Naive thymus-derived CD4-positive, alpha-beta T cell (primary cell): ENCODE measurements at regions of chr16 and their contacts with region 1.

Region 1: DNA sequence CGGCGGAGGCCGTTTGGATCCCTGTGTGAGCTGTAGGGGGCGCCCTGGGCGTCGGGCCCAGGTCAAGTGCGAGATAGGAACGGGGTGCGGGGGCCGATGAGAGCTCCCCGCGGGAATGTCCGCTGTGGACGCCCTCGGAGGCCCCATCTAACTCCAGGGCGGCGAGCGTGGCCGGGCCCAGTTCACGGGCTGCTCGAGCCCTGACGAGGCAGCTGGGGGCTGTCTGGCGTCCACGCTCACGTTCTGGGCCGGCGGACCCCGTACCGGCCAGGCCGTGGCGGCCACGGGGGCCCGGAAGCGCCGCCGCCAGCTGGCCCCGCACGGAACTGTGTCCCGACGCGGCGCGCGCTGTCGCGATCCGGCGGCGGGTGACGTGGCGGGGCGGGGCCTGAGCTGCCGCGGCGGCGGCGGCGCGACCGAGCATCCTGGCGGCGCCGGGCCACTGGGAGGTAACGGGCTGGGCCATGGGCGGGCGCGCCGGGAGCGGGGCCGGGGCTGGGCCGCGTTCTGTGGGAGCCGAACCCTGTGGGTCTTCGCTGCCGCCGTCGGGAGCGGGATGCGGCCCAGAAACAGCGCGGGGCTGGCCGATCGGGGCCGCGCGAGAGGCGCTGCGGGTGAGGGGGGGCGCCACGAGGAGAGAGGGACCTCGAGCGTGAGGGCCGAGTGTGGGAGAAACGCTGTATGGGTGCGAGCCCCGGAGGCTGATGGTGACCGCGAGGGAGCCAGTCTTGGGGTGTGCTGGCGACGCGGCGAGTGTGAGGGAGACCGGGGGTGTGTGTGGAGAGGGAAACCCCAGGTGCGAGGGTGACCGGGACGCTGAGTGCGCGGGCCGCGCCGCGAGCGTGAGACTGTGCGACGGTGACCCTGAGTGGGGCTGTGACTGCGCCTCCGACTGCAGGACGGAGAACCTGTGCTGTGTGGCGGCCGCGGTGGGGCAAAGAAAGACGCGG is at the start of gene SLC7A6:
- DNase-seq: peak; percentile 78 to 91 (median 84)
- ATAC-seq: peak; percentile 83
- H3K4me3 ChIP-seq: peak within 1 kb of the TSS; percentile 78
- H3K4me3 Mint-ChIP-seq: peak within 1 kb of the TSS; percentile 93 to 100 (median 97)
- H3K27ac ChIP-seq: peak within 1 kb of the TSS; percentile 99
- H3K27ac Mint-ChIP-seq: peak within 1 kb of the TSS; percentile 89 to 100 (median 98)
- H3K4me1 ChIP-seq: peaks cover 27 to 39% of the 10 kb centered on the region in 2 donors
- H3K4me1 Mint-ChIP-seq: peaks cover 40 to 69% (median 56%) of the 10 kb centered on the region in 7 donors
- H3K27me3 ChIP-seq: no peaks in the 10 kb centered on the region
- H3K27me3 Mint-ChIP-seq: no peaks in the 10 kb centered on the region
- total RNA-seq, gene SLC7A6: 112 to 248 (median 207) TPM

Region 2: GRCh38 chr16:68244903-68245853 is 19.2 kb before region 1 on chr16 and contains the start of gene PLA2G15:
- CTCF ChIA-PET with region 1: interaction called, 13 read pairs
- POLR2A ChIA-PET with region 1: no interaction called
- intact Hi-C with region 1: loop called (anchors 1 kb)
- DNase-seq: peak; percentile 89 to 96 (median 94)
- ATAC-seq: peak; percentile 99
- H3K4me3 ChIP-seq: peak within 1 kb of the TSS; percentile 99
- H3K4me3 Mint-ChIP-seq: peak within 1 kb of the TSS; percentile 91 to 100 (median 98)
- H3K27ac ChIP-seq: peak within 1 kb of the TSS; percentile 68
- H3K27ac Mint-ChIP-seq: peak within 1 kb of the TSS; percentile 61 to 94 (median 86)
- H3K4me1 ChIP-seq: peaks cover 13 to 14% of the 10 kb centered on the region in 2 donors
- H3K4me1 Mint-ChIP-seq: peaks cover 8 to 33% (median 28%) of the 10 kb centered on the region in 7 donors
- H3K27me3 ChIP-seq: no peaks in the 10 kb centered on the region
- H3K27me3 Mint-ChIP-seq: peaks cover 0 to 2% (median 0%) of the 10 kb centered on the region in 5 donors
- total RNA-seq, gene PLA2G15: 8.5 to 16.8 (median 9.9) TPM

Region 3: DNA sequence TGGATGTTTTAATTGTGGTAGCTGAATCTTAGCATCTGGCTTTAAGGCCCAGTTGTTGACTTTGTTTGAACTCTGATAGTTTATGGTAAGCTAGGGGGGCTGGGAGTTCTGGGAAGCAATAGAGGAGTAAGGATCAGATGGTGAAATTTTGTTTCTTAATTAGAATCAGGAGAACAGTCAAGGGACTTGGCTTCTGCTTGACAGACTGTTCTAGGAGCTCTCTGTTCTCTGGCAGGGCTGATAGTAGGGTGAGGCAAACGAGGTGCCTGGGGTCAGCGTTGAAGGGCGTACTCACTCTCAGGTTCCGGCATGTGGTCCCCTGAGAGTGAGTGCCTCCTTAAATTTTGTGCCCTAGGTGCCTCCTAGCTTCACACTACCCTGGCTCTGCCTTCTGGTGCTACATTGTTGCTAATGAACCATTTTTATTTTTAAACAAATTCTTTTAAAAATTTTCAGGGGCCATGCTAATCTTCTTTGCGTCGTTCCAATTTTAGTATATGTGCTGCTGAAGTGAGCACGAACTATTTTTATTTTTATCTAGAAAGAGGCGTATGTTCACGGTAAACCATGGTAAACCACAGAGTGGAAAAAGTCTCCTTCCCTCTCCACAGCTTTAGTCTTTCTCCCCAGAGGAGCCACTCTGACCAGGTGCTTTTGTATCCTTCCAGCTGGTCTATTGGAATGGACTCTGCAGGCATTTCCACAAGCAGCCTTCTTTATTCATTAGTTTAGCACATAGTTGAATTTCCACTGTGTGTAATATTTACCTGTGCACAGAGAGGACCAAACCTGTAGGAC is 19.6 kb after region 1 on chr16:
- CTCF ChIA-PET with region 1: interaction called, 317 read pairs
- POLR2A ChIA-PET with region 1: interaction called, 531 read pairs
- intact Hi-C with region 1: loop called (anchors 1 kb)
- DNase-seq: no peak
- ATAC-seq: no peak
- H3K4me3 ChIP-seq: peak overlapping the region; percentile 62
- H3K4me3 Mint-ChIP-seq: peak overlapping the region; percentile 78 to 93 (median 84)
- H3K27ac ChIP-seq: peak overlapping the region; percentile 68
- H3K27ac Mint-ChIP-seq: peak overlapping the region; percentile 84 to 92 (median 91)
- H3K4me1 ChIP-seq: peaks cover 71 to 97% of the 10 kb centered on the region in 2 donors
- H3K4me1 Mint-ChIP-seq: peaks cover 80 to 97% (median 89%) of the 10 kb centered on the region in 7 donors
- H3K27me3 ChIP-seq: no peaks in the 10 kb centered on the region
- H3K27me3 Mint-ChIP-seq: no peaks in the 10 kb centered on the region

Region 4: DNA sequence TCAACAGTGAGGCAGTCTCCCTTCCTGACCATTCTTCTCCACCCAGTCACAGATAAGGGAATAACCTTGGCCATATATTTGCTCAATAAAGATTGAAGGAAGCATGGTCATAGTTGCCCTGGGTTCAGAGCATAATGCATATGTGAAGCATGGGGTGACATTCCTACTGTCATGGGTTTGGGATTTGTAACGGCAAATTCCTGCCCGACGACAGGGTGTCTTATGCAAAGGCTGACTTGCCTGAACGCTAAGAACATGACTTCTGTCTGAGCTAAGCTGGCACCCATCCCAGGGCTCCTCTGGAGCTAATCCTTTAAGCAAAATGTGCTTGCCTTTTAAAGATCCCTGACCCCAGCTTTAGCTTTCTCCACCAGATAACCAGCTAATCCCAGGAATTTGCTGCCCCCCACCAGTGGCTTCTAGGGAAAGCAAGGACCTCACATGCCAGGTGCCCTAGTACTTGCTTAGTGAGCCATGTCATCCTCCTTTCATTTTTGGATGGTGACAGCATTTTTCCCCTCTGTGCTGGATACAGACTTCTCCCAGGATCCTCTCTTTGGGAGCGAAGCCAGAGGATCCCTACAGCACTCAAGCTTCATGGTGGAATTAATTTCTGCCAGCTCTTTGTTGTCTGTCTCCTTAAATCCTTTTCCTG is 34.6 kb after region 1 on chr16:
- CTCF ChIA-PET with region 1: interaction called, 317 read pairs
- POLR2A ChIA-PET with region 1: interaction called, 531 read pairs
- intact Hi-C with region 1: no loop called
- DNase-seq: no peak
- ATAC-seq: no peak
- H3K4me3 ChIP-seq: no peak overlapping the region
- H3K4me3 Mint-ChIP-seq: no peak overlapping the region
- H3K27ac ChIP-seq: peak overlapping the region; percentile 20
- H3K27ac Mint-ChIP-seq: peak overlapping the region; percentile 1 to 80 (median 30)
- H3K4me1 ChIP-seq: no peaks in the 10 kb centered on the region
- H3K4me1 Mint-ChIP-seq: peaks cover 5 to 73% (median 40%) of the 10 kb centered on the region in 7 donors
- H3K27me3 ChIP-seq: no peaks in the 10 kb centered on the region
- H3K27me3 Mint-ChIP-seq: no peaks in the 10 kb centered on the region

Region 5: DNA sequence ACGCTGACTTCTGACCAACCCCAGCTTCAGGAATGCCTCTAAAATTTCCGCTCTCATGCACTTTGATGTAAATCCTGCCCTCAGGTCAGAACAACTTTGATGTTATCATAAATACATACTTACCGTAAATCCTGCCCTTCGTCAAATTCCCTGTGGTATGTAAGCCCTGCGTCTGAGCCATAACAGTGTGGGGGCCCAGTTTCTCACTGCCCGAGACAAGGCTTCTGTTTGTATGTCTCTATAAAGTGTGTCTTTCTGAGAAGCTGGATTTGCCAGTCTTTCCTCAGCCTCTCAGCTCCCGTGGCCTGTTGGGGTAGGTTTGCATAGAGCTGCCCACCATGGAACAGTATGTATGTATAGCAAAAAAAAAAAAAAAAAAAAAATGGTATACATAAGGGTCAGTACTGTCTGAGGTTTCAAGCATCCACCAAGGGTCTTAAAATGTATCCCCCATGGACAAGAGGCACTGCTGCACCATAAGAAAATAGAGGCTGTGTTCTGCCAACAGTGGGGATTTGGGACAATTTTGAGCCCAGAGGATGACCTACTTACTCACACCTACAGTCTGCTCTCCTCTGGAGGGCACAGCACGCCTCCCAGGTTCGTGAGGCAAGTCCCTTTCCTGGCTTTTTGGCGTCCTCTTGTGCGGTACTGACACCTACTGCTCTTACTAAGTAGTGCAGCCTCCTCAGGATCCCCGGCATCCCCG is 63.9 kb after region 1 on chr16:
- CTCF ChIA-PET with region 1: interaction called, 224 read pairs
- POLR2A ChIA-PET with region 1: interaction called, 68 read pairs
- intact Hi-C with region 1: loop called (anchors 1 kb)
- DNase-seq: peak; percentile 52 to 81 (median 77)
- ATAC-seq: peak; percentile 99
- H3K4me3 ChIP-seq: no peak overlapping the region
- H3K4me3 Mint-ChIP-seq: no peak overlapping the region
- H3K27ac ChIP-seq: no peak overlapping the region
- H3K27ac Mint-ChIP-seq: peak overlapping the region in 4 of 9 donors; percentile 0 to 57 (median 9)
- H3K4me1 ChIP-seq: peaks cover 0 to 16% of the 10 kb centered on the region in 2 donors
- H3K4me1 Mint-ChIP-seq: peaks cover 16 to 28% (median 19%) of the 10 kb centered on the region in 7 donors
- H3K27me3 ChIP-seq: no peaks in the 10 kb centered on the region
- H3K27me3 Mint-ChIP-seq: no peaks in the 10 kb centered on the region

Region 6: GRCh38 chr16:68512183-68512582 is 247.8 kb after region 1 on chr16:
- CTCF ChIA-PET with region 1: no interaction called
- POLR2A ChIA-PET with region 1: no interaction called
- intact Hi-C with region 1: loop called in 1 of 2 experiments (anchors 5 kb)
- DNase-seq: peak in 1 of 9 donors; percentile 1
- ATAC-seq: no peak
- H3K4me3 ChIP-seq: no peak overlapping the region
- H3K4me3 Mint-ChIP-seq: peak overlapping the region in 1 of 10 donors; percentile 41
- H3K27ac ChIP-seq: no peak overlapping the region
- H3K27ac Mint-ChIP-seq: peak overlapping the region in 1 of 9 donors; percentile 10
- H3K4me1 ChIP-seq: peaks cover 0 to 3% of the 10 kb centered on the region in 2 donors
- H3K4me1 Mint-ChIP-seq: peaks cover 0 to 14% (median 3%) of the 10 kb centered on the region in 7 donors
- H3K27me3 ChIP-seq: no peaks in the 10 kb centered on the region
- H3K27me3 Mint-ChIP-seq: peaks cover 0 to 25% (median 0%) of the 10 kb centered on the region in 5 donors